ENCODE measurements at regions of chr11 and their contacts with region 1.

Region 1: DNA sequence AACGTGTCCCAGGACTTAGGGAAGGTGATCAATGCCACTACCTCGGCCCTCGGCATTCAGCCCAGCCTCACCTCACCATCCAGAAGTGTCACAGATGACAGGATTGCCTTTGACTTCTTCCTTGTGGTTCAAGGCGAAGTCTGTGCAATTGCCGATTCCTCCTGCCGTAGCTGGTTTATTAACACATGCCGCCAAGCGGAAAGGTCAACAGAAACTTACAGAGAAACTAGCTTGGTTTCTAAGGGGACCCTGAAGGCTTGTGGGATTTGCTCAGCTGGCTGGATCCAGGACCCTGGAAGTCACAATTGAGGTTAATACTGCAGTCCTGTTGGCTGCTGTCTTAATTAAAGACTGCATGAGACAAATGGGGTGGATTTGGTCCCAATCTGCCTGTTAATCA is 65.6 kb downstream of the SHANK2 start:
- DNase-seq: no peak
- H3K4me3 ChIP-seq: no peak overlapping the region
- H3K27ac ChIP-seq: no peak overlapping the region
- H3K4me1 ChIP-seq: no peaks in the 10 kb centered on the region
- H3K27me3 ChIP-seq: no peaks in the 10 kb centered on the region
- CTCF ChIP-seq: no peak
- POLR2A ChIP-seq: no peak

Region 2: GRCh38 chr11:70587075-70587389 is 599.8 kb before region 1 on chr11:
- intact Hi-C with region 1: loop called (anchors 5 kb)
- DNase-seq: no peak
- H3K4me3 ChIP-seq: no peak overlapping the region
- H3K27ac ChIP-seq: no peak overlapping the region
- H3K4me1 ChIP-seq: no peaks in the 10 kb centered on the region
- H3K27me3 ChIP-seq: no peaks in the 10 kb centered on the region
- CTCF ChIP-seq: no peak
- POLR2A ChIP-seq: no peak

Region 3: DNA sequence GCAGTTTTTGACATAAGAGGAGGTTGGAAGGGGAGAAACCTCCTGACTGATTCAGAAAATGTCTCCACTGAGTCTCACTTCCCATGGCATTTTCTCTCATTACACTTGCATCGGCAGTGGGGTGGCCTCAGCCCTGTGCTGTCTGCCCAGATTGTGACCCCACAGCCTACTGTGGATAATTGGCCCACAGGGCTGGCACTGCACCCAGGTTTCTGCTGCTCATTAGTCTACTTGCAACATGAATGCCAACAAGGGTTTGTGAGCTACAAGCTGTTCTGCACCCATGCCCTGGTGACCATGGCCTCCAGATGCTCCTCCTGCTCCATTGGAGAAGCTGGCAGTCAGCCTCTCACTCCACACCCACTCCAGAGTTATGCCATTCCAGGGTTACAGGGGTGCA is 492.4 kb before region 1 on chr11:
- intact Hi-C with region 1: no loop called
- DNase-seq: no peak
- H3K4me3 ChIP-seq: no peak overlapping the region
- H3K27ac ChIP-seq: no peak overlapping the region
- H3K4me1 ChIP-seq: no peaks in the 10 kb centered on the region
- H3K27me3 ChIP-seq: no peaks in the 10 kb centered on the region
- CTCF ChIP-seq: no peak
- POLR2A ChIP-seq: no peak

Region 4: GRCh38 chr11:71266221-71266833 is 79.5 kb after region 1 on chr11:
- intact Hi-C with region 1: no loop called
- DNase-seq: peak in 1 of 2 donors; percentile 69
- H3K4me3 ChIP-seq: no peak overlapping the region
- H3K27ac ChIP-seq: no peak overlapping the region
- H3K4me1 ChIP-seq: no peaks in the 10 kb centered on the region
- H3K27me3 ChIP-seq: no peaks in the 10 kb centered on the region
- CTCF ChIP-seq: no peak
- POLR2A ChIP-seq: no peak

Measured in vagina (tissue), 2 donors.